HCT116 (cell line): ENCODE measurements at regions of chr11 and their contacts with region 1.

Region 1: DNA sequence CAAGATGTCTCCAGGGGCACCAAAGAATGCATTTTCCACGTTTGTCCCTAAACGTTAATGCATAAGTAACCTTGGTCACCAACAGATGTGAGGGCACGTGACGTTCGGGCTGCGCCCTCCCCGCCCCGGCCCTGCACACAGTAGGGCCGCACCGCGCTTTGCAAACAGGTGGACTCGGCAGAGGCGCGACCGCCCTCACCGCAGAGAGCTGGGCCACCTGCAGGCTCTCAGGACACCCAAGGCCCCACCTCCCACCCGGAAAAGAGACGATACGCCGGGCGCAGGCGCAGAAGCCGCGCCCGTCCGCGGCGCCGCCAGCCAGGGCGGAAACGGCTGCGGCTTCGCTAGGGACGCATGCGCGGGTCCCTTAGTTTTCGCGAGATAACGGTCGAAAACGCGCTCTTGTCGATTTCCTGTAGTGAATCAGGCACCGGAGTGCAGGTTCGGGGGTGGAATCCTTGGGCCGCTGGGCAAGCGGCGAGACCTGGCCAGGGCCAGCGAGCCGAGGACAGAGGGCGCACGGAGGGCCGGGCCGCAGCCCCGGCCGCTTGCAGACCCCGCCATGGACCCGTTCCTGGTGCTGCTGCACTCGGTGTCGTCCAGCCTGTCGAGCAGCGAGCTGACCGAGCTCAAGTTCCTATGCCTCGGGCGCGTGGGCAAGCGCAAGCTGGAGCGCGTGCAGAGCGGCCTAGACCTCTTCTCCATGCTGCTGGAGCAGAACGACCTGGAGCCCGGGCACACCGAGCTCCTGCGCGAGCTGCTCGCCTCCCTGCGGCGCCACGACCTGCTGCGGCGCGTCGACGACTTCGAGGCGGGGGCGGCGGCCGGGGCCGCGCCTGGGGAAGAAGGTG is at the start of gene FADD:
- DNase-seq: peak; percentile 88
- ATAC-seq: peak; percentile 91
- H3K4me3 ChIP-seq: peak within 1 kb of the TSS; percentile 94 to 96
- H3K27ac ChIP-seq: peak within 1 kb of the TSS; percentile 96
- H3K4me1 ChIP-seq: peaks cover 7 to 31% of the 10 kb centered on the region in 2 experiments; a peak in 3 of 4 replicates
- H3K27me3 ChIP-seq: no peaks in the 10 kb centered on the region
- CTCF ChIP-seq: no peak
- POLR2A ChIP-seq: peak; percentile 49
- RAD21 ChIP-seq: no peak
- total RNA-seq, gene FADD: 26.7 TPM

Region 2: DNA sequence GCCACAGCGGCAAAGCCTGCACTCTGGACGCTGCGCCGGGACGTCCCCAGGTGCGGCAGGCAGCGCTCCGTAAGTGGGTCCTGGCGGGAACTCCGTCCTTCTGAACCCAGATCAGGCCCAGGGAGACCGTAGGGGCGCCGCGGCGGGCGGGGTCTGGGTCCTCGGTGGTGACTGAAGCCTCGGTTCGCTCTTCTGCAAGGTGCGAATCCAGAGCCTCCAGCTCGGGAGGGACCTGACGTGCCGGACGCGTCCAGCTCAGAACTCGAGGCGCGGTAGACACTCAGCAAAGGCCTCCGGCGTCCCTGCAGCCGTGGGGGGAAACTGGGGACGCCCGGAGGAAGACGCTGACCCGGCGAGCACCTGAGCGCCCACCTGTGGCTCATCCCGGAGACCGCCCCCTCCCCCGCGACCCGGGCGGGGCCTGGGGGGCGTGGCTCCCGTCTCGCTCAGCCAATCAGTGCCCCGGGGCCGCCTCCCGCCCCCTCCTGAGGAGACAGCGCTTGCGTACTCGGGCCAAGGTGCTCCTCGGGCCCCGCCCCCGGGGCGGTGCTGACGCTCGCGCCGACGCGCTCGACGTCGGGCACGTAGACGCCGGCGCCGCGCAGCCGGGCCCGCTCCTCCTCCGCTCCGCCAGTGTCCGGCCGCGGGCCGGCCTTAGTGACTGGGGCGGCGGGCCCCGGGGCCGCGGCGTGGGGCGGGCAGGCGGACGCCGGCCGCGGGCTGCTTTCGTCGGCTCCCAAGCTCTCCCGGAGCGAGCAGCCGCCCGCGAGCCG is 67.2 kb after region 1 on chr11 and contains the start of gene PPFIA1:
- CTCF ChIA-PET with region 1: no interaction called
- POLR2A ChIA-PET with region 1: no interaction called
- RAD21 ChIA-PET with region 1: no interaction called
- intact Hi-C with region 1: loop called (anchors 5 kb)
- DNase-seq: peak; percentile 91
- ATAC-seq: peak; percentile 93
- H3K4me3 ChIP-seq: peak within 1 kb of the TSS; percentile 85 to 94
- H3K27ac ChIP-seq: peak within 1 kb of the TSS; percentile 89
- H3K4me1 ChIP-seq: peaks cover 4 to 21% of the 10 kb centered on the region in 2 experiments; a peak in 3 of 4 replicates
- H3K27me3 ChIP-seq: no peaks in the 10 kb centered on the region
- CTCF ChIP-seq: no peak
- POLR2A ChIP-seq: peak; percentile 91
- RAD21 ChIP-seq: no peak
- total RNA-seq, gene PPFIA1: 48.6 TPM